Dendritic cell treated with granulocyte-macrophage colony-stimulating factor and Interleukin-4, amounts not matched to agents 40 ng/mL and 50 ng/mL, for 4 days (primary cell): ENCODE measurements at regions of chr3 and their contacts with region 1.

Region 1: DNA sequence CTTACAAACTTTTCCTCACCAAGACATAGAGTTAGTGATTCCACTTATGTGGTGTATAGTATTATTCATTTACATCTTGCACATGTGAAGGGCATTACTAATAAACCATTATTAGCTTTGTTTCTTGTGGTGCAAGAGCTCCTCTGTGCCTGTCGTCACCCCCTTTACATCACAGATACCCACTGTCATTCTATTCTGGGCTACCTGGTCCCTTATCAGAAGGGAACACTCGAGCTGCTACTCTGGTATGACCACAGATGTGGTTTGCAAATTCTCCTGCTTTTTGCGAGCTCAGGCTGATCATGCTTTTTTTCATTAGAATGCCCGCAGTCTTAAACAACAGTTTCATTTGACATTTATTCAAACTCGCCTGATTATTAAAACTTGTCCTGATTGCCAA is 13.9 kb upstream of the SENP2 start:
- H3K4me3 Mint-ChIP-seq: no peak overlapping the region
- H3K27ac Mint-ChIP-seq: no peak overlapping the region
- H3K4me1 Mint-ChIP-seq: no peaks in the 10 kb centered on the region
- H3K27me3 Mint-ChIP-seq: no peaks in the 10 kb centered on the region

Region 2: GRCh38 chr3:185282696-185283394 is 289.3 kb before region 1 on chr3:
- intact Hi-C with region 1: no loop called
- H3K4me3 Mint-ChIP-seq: peak overlapping the region; percentile 98
- H3K27ac Mint-ChIP-seq: peak overlapping the region; percentile 92
- H3K4me1 Mint-ChIP-seq: peaks cover 25% of the 10 kb centered on the region
- H3K27me3 Mint-ChIP-seq: no peaks in the 10 kb centered on the region

Region 3: GRCh38 chr3:185353823-185354614 is 218.2 kb before region 1 on chr3:
- intact Hi-C with region 1: loop called (anchors 10 kb)
- H3K4me3 Mint-ChIP-seq: no peak overlapping the region
- H3K27ac Mint-ChIP-seq: no peak overlapping the region
- H3K4me1 Mint-ChIP-seq: no peaks in the 10 kb centered on the region
- H3K27me3 Mint-ChIP-seq: peaks cover 5% of the 10 kb centered on the region

Region 4: GRCh38 chr3:185813691-185814215 is 241.6 kb after region 1 on chr3:
- intact Hi-C with region 1: no loop called
- H3K4me3 Mint-ChIP-seq: no peak overlapping the region
- H3K27ac Mint-ChIP-seq: peak overlapping the region; percentile 66
- H3K4me1 Mint-ChIP-seq: peaks cover 41% of the 10 kb centered on the region
- H3K27me3 Mint-ChIP-seq: no peaks in the 10 kb centered on the region